ENCODE measurements at regions of chr6 and their contacts with region 1.

Region 1: DNA sequence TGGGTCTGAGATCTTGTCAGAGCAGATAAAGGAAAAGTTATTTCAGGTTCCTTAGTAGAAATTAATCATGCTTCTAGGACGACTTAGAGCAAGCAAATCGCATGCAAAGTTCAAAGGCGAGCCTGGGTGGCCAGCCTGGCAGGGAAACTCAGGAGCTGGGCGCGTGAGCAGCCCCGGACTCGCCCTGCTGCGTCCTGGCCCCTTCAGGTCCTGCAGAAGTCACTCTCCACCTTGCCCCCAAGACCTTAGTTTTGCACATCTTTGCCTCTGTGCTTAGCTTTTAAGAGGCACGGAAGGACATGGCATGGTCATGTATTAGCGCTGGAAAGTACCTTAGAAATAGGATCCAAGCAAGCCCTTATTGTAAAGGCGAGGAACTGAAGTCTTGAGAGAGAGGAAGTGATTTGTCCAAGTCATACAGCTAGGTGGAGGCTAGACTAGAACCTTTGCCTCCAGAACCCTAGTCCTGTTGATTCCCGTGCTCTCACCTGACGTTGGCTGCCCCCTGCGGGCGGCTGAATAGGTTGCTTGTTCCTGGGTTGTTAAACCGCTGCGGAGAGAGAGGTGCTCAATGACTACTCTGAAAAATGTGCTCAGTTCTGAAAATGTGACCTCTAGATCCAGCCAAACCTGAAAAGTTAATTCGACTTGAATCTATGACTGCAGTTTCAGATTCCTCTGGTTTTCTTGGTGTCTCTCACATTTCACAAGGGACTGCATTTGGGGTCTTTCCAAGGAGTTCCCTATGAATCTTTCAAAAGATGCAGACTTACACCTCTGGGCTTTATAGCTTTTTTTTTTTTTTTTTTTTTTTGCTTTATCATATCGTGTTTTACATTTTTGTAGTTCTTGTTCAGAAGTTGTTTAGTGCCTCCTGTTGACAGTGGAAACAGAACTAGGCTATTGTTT is 2.7 kb downstream of the MYB start:
- DNase-seq: peak; percentile 92
- ATAC-seq: peak; percentile 45
- H3K4me3 Mint-ChIP-seq: peak overlapping the region; percentile 97
- H3K27ac Mint-ChIP-seq: peak overlapping the region; percentile 92
- H3K4me1 Mint-ChIP-seq: peaks cover 32% of the 10 kb centered on the region
- H3K27me3 Mint-ChIP-seq: no peaks in the 10 kb centered on the region

Region 2: DNA sequence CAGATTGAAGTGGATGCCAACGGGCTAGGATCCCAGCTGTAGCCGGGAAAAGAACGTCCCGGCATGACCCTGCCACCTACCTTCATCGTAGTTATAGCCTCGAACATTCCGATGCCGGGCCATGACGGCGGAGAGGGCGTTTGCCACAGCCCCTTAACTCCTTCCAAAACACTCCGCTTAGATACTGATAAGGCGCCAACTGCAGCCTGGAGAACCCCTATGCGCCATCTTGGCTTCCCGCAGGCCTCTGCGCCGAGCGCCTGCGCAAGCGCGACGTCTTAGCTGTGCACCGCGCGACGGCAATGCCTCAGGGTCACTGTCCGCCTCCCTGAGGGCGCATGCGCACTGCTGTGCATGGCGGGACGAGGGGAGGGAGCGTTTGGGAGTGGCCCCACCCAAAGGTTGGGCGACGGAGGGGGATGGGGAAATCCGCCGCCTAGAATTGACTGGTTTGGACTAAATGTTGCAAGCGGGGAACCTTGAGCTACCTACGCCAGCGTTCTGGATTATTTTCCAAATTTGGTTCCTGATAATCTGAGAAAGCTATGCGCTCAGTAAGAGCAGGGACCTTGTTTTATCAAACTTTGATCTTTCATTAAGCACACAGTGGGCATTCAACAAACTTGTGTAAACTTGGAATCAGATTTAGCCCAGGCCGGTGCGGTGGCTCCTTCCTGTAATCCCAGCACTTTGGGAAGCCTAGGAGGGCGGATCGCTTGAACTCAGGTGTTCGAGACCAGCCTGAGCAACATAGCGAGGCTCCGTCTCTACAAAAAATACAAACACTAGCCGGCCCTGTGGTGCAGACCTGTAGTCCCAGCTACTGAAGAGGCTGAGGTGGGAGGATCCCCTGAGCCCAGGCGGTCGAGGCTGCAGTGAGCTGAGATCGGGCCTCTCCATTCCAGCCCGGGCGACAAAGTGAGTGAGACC is 129.0 kb before region 1 on chr6 and contains the start of gene HBS1L:
- CTCF ChIA-PET with region 1: interaction called, 11 read pairs
- DNase-seq: peak; percentile 99
- ATAC-seq: peak; percentile 98
- H3K4me3 Mint-ChIP-seq: peak within 1 kb of the TSS; percentile 95
- H3K27ac Mint-ChIP-seq: peak within 1 kb of the TSS; percentile 92
- H3K4me1 Mint-ChIP-seq: peaks cover 37% of the 10 kb centered on the region
- H3K27me3 Mint-ChIP-seq: no peaks in the 10 kb centered on the region
- total RNA-seq, gene HBS1L: 92.2 to 112 TPM

Region 3: GRCh38 chr6:135128268-135128914 is 55.4 kb before region 1 on chr6:
- CTCF ChIA-PET with region 1: interaction called, 12 read pairs
- DNase-seq: peak; percentile 85
- ATAC-seq: peak; percentile 96
- H3K4me3 Mint-ChIP-seq: peak overlapping the region; percentile 65
- H3K27ac Mint-ChIP-seq: peak overlapping the region; percentile 99
- H3K4me1 Mint-ChIP-seq: peaks cover 51% of the 10 kb centered on the region
- H3K27me3 Mint-ChIP-seq: no peaks in the 10 kb centered on the region

Region 4: GRCh38 chr6:135162678-135163439 is 20.9 kb before region 1 on chr6:
- CTCF ChIA-PET with region 1: interaction called, 36 read pairs
- DNase-seq: peak; percentile 77
- ATAC-seq: peak; percentile 24
- H3K4me3 Mint-ChIP-seq: peak overlapping the region; percentile 55
- H3K27ac Mint-ChIP-seq: peak overlapping the region; percentile 87
- H3K4me1 Mint-ChIP-seq: peaks cover 62% of the 10 kb centered on the region
- H3K27me3 Mint-ChIP-seq: no peaks in the 10 kb centered on the region

Region 5: DNA sequence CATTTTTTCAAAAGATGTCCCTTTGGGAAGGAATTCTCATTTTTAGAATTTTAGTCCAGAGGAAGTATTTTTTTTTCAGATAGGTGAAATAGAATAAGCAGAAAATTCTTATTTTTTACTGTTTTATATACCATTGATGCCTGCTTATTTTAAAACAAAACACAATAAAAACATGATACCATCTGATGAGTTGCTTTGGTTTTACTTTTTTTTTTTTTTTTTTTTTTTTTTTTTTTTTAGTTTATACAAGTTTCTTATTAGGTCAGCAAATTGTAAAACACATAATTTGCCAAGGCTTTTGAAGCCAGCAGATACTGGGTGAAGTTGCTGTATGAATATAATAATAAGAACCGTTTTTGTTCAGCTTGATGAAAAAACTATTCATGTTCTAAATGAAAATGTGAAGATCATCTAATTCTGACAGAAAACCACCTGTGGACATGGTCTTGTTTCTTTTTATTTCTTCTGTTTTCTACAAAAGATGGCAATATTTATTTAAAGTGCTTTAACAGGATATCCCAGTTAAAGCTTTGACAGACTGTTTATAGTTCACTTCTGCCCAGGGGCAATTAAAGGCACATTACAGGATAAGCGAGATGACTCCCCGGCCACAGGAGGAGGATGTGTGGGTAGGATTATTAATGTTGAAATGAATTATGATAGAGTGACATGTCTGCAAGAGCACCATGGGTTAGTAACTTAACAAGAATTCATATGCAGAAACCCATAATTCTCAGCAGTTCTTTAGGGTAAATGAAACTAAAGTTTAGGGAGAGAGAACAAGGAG is 28.4 kb after region 1 on chr6:
- CTCF ChIA-PET with region 1: interaction called, 17 read pairs
- DNase-seq: peak; percentile 66
- ATAC-seq: peak; percentile 69
- H3K4me3 Mint-ChIP-seq: peak overlapping the region; percentile 33
- H3K27ac Mint-ChIP-seq: peak overlapping the region; percentile 87
- H3K4me1 Mint-ChIP-seq: peaks cover 39% of the 10 kb centered on the region
- H3K27me3 Mint-ChIP-seq: no peaks in the 10 kb centered on the region

Region 6: DNA sequence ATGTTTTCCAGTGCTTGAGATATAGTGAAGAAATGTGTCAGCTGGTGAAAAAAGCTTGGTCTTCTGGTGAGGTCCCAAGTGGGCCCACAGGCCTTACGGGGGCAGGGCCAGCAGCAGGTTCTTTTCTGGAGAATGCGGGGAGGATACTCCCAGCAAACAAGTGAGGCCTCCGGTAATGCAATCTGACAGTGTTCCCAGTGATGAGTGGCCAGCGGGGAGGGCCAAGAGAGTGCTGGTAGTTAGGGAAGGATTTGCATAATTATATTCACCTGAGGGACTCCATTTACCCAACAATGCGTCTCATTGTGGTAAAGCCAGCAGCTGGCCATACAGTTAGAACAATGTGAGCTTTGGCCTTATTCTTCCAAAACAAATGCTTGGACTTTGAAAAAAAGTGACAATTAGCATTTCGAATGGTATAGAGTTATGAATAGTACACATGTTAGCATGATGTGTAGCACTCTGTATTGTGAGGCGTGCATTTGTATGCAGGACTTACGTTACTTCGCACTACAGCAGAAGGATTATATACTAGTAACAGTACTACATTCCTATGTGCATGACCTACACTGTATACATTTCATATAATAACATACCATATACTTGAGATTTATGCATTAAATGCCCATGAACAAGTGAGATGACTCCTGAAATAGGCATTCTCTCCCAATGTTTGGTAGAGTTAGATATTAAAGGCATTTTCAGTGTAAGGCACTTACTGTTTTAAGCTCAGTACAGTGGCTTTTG is 67.1 kb after region 1 on chr6:
- CTCF ChIA-PET with region 1: no interaction called
- DNase-seq: no peak
- ATAC-seq: no peak
- H3K4me3 Mint-ChIP-seq: no peak overlapping the region
- H3K27ac Mint-ChIP-seq: no peak overlapping the region
- H3K4me1 Mint-ChIP-seq: peaks cover 2% of the 10 kb centered on the region
- H3K27me3 Mint-ChIP-seq: no peaks in the 10 kb centered on the region

Region 7: DNA sequence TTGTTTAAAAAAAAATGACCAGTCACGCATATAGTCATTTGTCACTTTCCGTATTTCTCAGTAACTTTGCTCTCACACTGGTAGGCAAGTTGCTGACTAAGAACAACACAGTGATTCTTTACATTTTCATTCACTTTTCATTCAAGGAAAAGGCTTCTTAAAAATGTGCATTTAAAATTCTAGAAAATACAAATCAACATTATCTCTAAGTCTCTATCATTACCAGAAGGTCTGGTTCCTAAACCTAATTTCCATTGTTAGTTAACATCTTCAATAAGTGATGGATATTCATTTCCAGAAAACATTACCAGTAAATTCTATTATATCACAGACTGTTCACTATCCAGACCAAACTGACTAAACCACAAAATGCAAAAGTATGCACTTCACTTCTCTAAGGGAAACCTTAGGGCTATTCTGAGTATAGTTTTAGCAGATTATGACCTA is 198.4 kb after region 1 on chr6:
- CTCF ChIA-PET with region 1: no interaction called
- DNase-seq: no peak
- ATAC-seq: peak; percentile 84
- H3K4me3 Mint-ChIP-seq: no peak overlapping the region
- H3K27ac Mint-ChIP-seq: no peak overlapping the region
- H3K4me1 Mint-ChIP-seq: peaks cover 9% of the 10 kb centered on the region
- H3K27me3 Mint-ChIP-seq: no peaks in the 10 kb centered on the region

Measured in activated CD8-positive, alpha-beta memory T cell treated with anti-CD3 and anti-CD28 coated beads, Interleukin-2, amount 10 ng/mL, durations not matched to agents 7 days and 5 days (primary cell).